ENCODE measurements at regions of chr11 and their contacts with region 1.

Region 1: GRCh38 chr11:93895106-93895862 is 44.9 kb upstream of the VSTM5 start:
- DNase-seq: no peak
- ATAC-seq: peak in 2 of 4 donors; percentile 54 to 58
- H3K4me3 ChIP-seq: no peak overlapping the region
- H3K27ac ChIP-seq: no peak overlapping the region
- H3K4me1 ChIP-seq: no peaks in the 10 kb centered on the region
- H3K27me3 ChIP-seq: no peaks in the 10 kb centered on the region
- CTCF ChIP-seq: peak; percentile 41

Region 2: GRCh38 chr11:94417386-94417987 is 522.2 kb after region 1 on chr11:
- intact Hi-C with region 1: loop called in 1 of 2 experiments (anchors 10 kb)
- DNase-seq: no peak
- ATAC-seq: no peak
- H3K4me3 ChIP-seq: no peak overlapping the region
- H3K27ac ChIP-seq: no peak overlapping the region
- H3K4me1 ChIP-seq: no peaks in the 10 kb centered on the region
- H3K27me3 ChIP-seq: no peaks in the 10 kb centered on the region
- CTCF ChIP-seq: peak; percentile 26

Region 3: DNA sequence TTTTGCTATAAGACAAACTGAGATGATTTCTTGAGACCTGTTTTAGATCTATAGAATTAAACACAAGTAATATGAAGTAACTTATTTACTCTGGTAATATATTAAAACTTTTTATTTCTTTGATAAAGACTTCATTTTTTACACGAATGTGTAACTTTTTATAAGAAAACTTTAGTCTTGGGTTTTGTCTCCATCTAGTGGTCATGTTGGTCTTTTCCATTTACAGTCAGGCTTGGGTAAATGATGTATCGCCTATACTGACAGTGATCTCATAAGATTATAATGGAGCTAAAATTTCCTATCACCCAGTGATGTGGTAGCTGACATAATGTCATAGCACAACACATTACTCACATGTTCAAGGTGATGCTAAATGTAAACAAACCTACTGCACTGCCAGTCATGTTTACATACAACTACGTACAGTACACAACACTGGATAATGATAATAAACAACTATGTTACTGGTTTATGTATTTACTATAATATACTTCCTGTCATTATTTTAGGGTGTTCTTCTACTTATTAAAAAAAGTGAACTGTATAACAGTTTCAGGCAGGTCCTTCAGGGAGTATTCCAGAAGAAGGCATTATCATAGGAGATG is 609.5 kb after region 1 on chr11:
- intact Hi-C with region 1: loop called in 1 of 2 experiments (anchors 5 kb)
- DNase-seq: no peak
- ATAC-seq: no peak
- H3K4me3 ChIP-seq: no peak overlapping the region
- H3K27ac ChIP-seq: no peak overlapping the region
- H3K4me1 ChIP-seq: no peaks in the 10 kb centered on the region
- H3K27me3 ChIP-seq: no peaks in the 10 kb centered on the region
- CTCF ChIP-seq: peak; percentile 58

Measured in psoas muscle (tissue), 8 donors.